Activated T-helper 2 cell treated with anti-CD3 and anti-CD28 coated beads, Interferon-gamma antibody, Interleukin-2, Interleukin-4, amounts not matched to agents 10 μg/mL and 5 μg/mL and 100 μg/mL, durations not matched to agents 14 hours and 24 hours and 36 hours (primary cell): ENCODE measurements at regions of chr9 and their contacts with region 1.

Region 1: DNA sequence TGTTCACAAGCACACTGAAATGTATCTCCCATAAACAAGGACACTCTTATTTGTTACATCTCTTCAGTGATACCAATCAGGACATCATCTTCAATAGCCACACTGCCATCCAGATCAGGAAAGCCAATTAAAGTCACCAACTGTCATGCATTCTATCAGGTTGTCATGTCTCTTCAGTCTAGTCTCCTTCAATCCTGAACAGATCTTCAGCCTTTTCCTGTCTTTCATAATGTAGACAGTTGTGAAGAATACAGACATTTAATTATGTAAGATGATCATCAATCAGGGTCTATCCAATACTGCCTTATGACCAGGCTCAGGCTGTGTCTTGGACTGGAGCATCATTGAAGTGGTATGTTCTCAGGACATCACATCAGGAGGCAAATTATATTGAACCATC is 419.8 kb upstream of the SMC2 start:
- DNase-seq: no peak
- H3K4me3 Mint-ChIP-seq: no peak overlapping the region
- H3K27ac Mint-ChIP-seq: no peak overlapping the region
- H3K4me1 Mint-ChIP-seq: no peaks in the 10 kb centered on the region
- H3K27me3 Mint-ChIP-seq: no peaks in the 10 kb centered on the region

Region 2: GRCh38 chr9:103615994-103616393 is 58.3 kb before region 1 on chr9:
- intact Hi-C with region 1: loop called (anchors 2 kb)
- DNase-seq: no peak
- H3K4me3 Mint-ChIP-seq: no peak overlapping the region
- H3K27ac Mint-ChIP-seq: no peak overlapping the region
- H3K4me1 Mint-ChIP-seq: no peaks in the 10 kb centered on the region
- H3K27me3 Mint-ChIP-seq: no peaks in the 10 kb centered on the region